Thyroid gland (tissue), 4 donors: ENCODE measurements at regions of chr10 and their contacts with region 1.

Region 1: DNA sequence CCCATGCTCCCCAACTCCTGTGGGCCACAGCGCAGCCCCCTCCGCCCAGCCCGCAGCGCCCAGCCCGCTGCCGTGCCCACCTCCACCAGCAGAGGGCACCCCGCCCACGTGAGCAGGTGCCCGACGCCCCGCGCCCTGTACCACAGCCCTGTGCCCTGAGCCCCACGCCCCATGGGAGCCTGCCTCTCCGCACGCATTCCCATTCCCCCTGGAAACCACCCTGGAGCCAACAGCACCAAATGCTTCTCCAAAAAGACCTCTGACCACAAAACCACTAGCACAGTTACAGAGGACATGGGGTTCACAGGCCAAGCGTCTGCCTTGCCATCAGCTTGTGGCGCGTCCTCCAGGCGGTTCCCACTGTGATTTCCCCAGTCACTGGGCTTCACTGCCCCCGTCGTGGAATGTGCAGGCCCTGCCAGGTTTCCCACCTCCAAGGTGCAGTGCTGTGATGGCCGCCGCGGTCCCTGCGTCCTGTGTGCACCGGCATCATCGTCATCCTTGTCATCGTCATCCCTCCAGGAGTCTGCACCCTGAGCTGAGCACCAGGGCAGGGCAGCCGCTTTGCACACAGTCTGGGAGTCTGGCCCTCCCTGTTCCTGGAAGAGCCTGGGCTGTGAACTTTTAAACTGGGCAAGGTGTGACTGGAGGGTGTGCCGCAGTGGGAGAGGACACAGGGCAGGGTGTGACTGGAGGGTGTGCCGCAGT is 61.7 kb downstream of the PWWP2B start:
- DNase-seq: peak; percentile 46 to 49
- H3K4me3 ChIP-seq: no peak overlapping the region
- H3K27ac ChIP-seq: no peak overlapping the region
- H3K4me1 ChIP-seq: peaks cover 4 to 10% of the 10 kb centered on the region in 2 donors
- H3K27me3 ChIP-seq: no peaks in the 10 kb centered on the region
- CTCF ChIP-seq: peak; percentile 84 to 99 (median 94)
- POLR2A ChIP-seq: no peak

Region 2: GRCh38 chr10:132637477-132638129 is 178.9 kb after region 1 on chr10:
- intact Hi-C with region 1: loop called (anchors 1 kb)
- DNase-seq: no peak
- H3K4me3 ChIP-seq: no peak overlapping the region
- H3K27ac ChIP-seq: no peak overlapping the region
- H3K4me1 ChIP-seq: peaks cover 2 to 16% of the 10 kb centered on the region in 2 donors
- H3K27me3 ChIP-seq: no peaks in the 10 kb centered on the region
- CTCF ChIP-seq: peak in 5 of 6 experiments; percentile 37 to 93 (median 65)
- POLR2A ChIP-seq: no peak